Mucosa of descending colon (tissue), 3 donors: ENCODE measurements at regions of chr15 and their contacts with region 1.

Region 1: GRCh38 chr15:89057504-89058133 is 30.6 kb upstream of the ABHD2 start:
- DNase-seq: peak; percentile 79 to 90 (median 87)
- ATAC-seq: peak; percentile 97
- H3K4me3 ChIP-seq: no peak overlapping the region
- H3K4me1 ChIP-seq: no peaks in the 10 kb centered on the region
- CTCF ChIP-seq: peak; percentile 98

Region 2: DNA sequence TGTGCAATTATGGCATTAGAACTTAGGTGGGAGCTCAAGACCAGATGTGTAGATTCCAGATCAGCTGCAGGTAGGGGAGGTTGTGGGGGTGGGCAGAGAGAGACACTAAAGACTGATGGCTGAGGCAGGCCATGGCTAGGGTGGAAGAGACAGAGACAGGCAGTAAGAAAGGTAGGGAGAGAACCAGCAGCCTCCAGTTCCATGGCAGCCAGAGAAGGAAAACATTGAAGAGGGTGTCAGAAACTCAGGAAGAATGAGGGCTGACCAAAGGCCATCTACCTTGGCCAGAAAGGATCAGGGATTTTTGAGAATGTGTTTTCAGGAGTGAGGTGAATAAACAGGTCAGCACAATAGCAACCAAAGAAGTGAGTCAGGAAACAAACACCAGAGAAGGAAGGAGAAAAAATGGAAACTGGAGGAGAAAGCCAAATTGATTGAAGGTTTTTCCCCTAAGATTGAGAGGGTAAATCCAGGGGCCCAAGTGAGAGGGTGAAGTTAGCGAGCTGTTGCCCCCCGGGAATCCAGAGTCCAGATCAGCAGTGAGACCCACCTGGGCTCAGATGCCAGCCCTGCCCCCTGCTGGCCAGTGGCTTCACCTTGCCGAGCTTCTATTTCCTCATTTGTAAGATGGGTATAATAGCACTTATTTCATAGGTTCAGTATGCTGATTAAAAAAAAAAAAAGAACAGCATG is 71.7 kb after region 1 on chr15:
- intact Hi-C with region 1: loop called (anchors 5 to 10 kb)
- DNase-seq: peak in 2 of 3 donors; percentile 77 to 80
- ATAC-seq: peak; percentile 66
- H3K4me3 ChIP-seq: no peak overlapping the region
- H3K4me1 ChIP-seq: peaks cover 3% of the 10 kb centered on the region
- CTCF ChIP-seq: peak; percentile 61

Region 3: DNA sequence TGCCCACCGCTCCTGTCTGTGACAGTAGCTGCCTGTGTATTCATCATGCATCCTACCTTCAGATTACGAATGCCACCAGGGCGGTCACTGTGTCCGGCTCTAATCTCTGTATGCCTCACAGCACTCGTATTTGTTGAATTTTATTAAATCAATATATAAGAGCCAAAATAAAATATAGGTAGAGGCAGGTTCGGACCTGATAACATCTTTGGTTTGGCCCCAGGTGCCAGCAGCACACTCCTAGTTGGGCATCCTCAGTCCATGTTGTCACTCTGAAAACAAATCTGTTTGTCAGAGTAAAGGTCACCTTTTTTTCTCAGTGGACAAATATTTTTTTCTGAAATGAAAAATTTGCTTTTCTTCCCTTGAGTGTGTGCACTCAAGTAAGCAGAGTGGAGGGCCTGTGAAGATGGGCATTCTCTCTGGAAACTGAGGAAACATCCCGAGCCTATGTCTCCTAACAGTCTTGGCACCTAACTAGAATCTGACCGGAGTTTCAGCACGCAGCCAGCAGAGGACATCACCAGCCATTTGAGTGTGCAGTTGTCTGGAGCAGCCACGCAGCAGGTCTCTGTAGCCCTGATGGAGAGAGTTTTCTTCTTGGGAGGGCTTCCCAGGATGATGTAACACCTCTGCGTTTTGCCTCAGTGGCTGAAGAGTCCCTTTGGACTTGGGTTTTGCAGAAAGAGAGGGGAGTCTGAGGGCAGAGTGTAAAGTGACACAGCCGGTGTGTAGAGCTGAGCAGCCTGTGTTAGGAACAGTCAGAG is 82.0 kb after region 1 on chr15:
- intact Hi-C with region 1: loop called in 1 of 2 experiments (anchors 10 kb)
- DNase-seq: no peak
- ATAC-seq: no peak
- H3K4me3 ChIP-seq: no peak overlapping the region
- H3K4me1 ChIP-seq: peaks cover 19% of the 10 kb centered on the region
- CTCF ChIP-seq: no peak

Region 4: GRCh38 chr15:89171136-89172072 is 113.8 kb after region 1 on chr15:
- intact Hi-C with region 1: loop called (anchors 5 kb)
- DNase-seq: peak in 2 of 3 donors; percentile 37 to 72
- ATAC-seq: peak; percentile 79
- H3K4me3 ChIP-seq: no peak overlapping the region
- H3K4me1 ChIP-seq: no peaks in the 10 kb centered on the region
- CTCF ChIP-seq: no peak

Region 5: DNA sequence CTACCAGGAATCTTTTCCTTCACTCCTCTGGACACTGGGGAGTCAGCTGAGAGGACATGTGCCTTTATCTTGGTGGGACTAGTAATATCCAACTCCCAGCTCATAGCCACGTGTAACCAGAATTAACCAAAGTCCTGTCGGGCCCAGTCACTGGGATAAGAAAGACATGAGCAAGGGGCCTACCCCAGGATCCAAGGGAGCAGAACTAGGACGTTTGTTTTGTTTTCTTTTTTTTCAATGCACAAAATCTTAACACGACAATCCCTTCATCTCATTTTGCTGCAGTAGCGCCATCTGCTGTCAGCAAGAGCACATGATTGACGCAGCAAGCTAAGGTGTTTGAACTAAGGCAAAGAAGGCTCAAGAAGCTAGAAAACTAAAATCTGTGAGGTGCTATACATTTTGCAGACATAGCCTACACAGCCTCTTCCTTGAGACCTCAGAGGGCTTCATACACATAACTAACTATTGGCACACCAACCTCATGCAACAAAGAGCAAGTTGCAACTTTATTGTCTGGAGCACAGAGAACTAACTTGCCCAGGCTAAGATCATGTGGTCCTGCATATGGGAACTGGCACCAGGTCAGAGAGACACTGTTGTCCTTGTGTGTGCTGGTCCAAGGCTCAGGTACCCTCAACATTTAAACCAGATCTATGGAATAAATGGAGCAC is 120.2 kb after region 1 on chr15:
- intact Hi-C with region 1: loop called (anchors 5 kb)
- DNase-seq: peak in 2 of 3 donors; percentile 46 to 69
- ATAC-seq: peak; percentile 71
- H3K4me3 ChIP-seq: no peak overlapping the region
- H3K4me1 ChIP-seq: no peaks in the 10 kb centered on the region
- CTCF ChIP-seq: peak; percentile 54

Region 6: DNA sequence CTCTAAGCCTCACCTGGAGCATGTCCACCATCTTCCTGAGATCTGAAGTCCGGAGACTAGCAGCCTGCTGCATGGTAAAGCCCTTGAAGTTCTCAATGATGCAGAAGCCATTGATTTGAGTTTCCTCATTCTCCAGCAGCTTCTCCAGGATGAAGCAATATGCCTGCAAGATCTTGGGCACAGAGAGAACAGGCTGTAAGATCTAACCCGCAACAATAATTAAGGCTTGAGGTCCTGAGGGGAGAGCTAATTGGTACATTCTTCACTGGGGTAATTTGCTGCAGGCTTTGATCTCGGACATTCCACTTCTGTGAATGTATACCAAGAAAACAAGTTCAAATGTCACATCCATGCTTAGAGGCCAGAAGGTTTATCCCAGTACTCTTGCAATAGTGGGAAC is 154.1 kb after region 1 on chr15:
- intact Hi-C with region 1: no loop called
- DNase-seq: no peak
- ATAC-seq: no peak
- H3K4me3 ChIP-seq: no peak overlapping the region
- H3K4me1 ChIP-seq: peaks cover 7% of the 10 kb centered on the region
- CTCF ChIP-seq: no peak